ENCODE measurements at regions of chr5 and their contacts with region 1.

Region 1: DNA sequence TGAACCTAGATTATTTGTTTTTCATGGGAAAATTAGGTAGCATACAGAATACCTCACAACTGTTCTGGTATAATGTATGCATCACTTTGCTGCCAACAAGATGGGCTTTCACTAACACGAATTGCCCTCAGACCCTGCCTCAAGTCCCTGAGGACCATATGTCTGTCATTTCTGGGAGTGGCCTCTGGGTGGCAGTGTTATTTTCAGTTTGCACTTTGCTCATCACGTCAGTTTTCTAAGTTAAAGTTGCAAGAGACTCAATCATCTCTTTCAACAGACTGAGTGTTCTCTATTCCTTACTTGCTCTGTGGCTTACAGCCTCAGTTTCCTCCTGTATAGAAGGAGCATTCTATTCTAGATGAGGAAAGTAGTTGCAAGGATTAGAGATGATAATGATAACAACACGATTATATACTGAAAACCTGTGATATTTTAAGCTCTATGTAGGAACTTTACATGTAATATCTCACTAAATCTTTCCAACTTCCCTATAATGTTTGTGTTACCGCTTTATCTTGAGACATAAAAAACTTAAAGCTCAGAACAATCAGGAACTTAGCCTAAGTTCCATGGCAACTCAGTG is 55.7 kb downstream of the TSSK1B start:
- DNase-seq: peak; percentile 43 to 54 (median 48)
- H3K4me3 ChIP-seq: no peak overlapping the region
- H3K4me3 Mint-ChIP-seq: peak overlapping the region; percentile 31 to 84 (median 69)
- H3K27ac ChIP-seq: no peak overlapping the region
- H3K27ac Mint-ChIP-seq: peak overlapping the region in 3 of 7 donors; percentile 5 to 73 (median 19)
- H3K4me1 ChIP-seq: peaks cover 30% of the 10 kb centered on the region
- H3K4me1 Mint-ChIP-seq: peaks cover 33 to 58% (median 48%) of the 10 kb centered on the region in 4 donors
- H3K27me3 ChIP-seq: no peaks in the 10 kb centered on the region
- H3K27me3 Mint-ChIP-seq: peaks cover 4 to 7% of the 10 kb centered on the region in 2 donors

Region 2: DNA sequence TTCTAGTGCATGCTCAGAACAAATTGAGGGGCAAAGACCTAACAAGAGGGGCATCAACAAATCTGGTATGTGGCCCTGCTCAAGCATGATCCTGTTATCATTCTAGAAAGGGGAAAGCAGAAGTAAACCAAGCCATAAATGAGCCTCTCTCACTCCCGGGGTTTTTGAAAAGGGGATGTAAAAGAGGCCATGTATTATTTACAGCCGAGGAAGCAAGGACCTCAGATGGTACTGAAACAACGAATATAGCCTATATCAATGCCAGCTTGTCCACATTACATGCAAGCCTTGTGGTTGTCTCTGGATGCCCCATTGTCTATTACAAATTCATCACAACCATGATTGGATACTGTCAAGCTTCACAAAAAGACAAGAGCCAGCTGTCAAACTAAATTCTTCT is 191.1 kb before region 1 on chr5:
- CTCF ChIA-PET with region 1: no interaction called
- POLR2A ChIA-PET with region 1: no interaction called
- intact Hi-C with region 1: no loop called
- DNase-seq: no peak
- H3K4me3 ChIP-seq: no peak overlapping the region
- H3K4me3 Mint-ChIP-seq: no peak overlapping the region
- H3K27ac ChIP-seq: no peak overlapping the region
- H3K27ac Mint-ChIP-seq: no peak overlapping the region
- H3K4me1 ChIP-seq: no peaks in the 10 kb centered on the region
- H3K4me1 Mint-ChIP-seq: peaks cover 0 to 9% (median 2%) of the 10 kb centered on the region in 4 donors
- H3K27me3 ChIP-seq: no peaks in the 10 kb centered on the region
- H3K27me3 Mint-ChIP-seq: no peaks in the 10 kb centered on the region

Region 3: DNA sequence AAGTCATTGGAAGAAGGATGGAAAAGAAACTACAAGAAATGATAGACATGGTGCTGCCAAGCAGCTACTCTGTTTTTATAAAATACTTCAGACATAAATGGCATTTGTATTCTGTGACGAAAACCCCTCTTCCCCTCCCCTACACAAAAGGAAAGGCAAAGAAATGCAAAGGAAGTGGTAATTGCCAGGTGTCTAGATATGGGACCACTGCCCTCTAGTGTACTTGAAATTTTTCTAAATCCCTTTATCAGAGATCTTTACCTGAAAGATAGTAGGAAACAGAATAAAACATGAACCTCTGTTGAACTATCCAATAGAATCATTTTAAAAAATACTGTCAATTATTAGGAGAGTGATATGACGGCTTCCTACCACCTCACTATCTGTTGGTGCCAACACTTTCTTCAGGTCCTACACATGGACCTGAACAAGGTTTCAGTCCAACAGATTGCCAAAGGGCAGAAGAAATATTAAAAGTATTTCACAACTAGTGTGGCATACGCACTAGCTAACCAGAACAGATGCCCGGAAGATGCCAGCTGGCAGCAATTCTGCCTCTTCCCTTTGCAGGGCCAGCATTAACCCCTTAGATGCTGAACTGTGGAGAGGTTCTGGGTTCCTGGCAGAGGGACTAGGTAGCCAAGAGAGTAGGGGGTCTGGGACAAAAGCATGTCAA is 48.4 kb before region 1 on chr5:
- CTCF ChIA-PET with region 1: interaction called, 5 read pairs
- POLR2A ChIA-PET with region 1: no interaction called
- intact Hi-C with region 1: loop called (anchors 1 kb)
- DNase-seq: peak; percentile 41 to 69 (median 65)
- H3K4me3 ChIP-seq: no peak overlapping the region
- H3K4me3 Mint-ChIP-seq: peak overlapping the region in 6 of 8 donors; percentile 0 to 49 (median 30)
- H3K27ac ChIP-seq: no peak overlapping the region
- H3K27ac Mint-ChIP-seq: peak overlapping the region in 3 of 7 donors; percentile 43 to 81 (median 77)
- H3K4me1 ChIP-seq: peaks cover 11% of the 10 kb centered on the region
- H3K4me1 Mint-ChIP-seq: peaks cover 10 to 20% (median 12%) of the 10 kb centered on the region in 4 donors
- H3K27me3 ChIP-seq: no peaks in the 10 kb centered on the region
- H3K27me3 Mint-ChIP-seq: no peaks in the 10 kb centered on the region

Region 4: DNA sequence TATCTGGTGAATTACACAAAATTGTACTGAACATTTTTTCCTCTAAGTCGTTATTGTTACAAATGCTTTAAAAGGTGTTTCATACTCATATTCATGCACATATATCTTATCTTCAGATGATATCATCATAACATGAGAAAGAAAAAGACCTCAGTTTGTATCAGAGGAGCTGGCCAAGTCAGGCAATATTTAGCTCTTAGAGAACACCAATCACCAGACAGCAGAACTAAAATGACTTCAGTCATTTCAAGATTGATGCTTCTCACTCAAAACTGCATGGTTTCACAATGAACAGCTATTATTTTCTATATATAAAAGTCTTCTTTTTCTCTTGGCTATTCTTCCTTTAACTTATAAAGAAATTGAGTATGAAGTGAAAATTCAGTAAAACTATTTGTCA is 11.2 kb after region 1 on chr5:
- CTCF ChIA-PET with region 1: interaction called, 16 read pairs
- POLR2A ChIA-PET with region 1: no interaction called
- intact Hi-C with region 1: no loop called
- DNase-seq: no peak
- H3K4me3 ChIP-seq: no peak overlapping the region
- H3K4me3 Mint-ChIP-seq: no peak overlapping the region
- H3K27ac ChIP-seq: no peak overlapping the region
- H3K27ac Mint-ChIP-seq: no peak overlapping the region
- H3K4me1 ChIP-seq: no peaks in the 10 kb centered on the region
- H3K4me1 Mint-ChIP-seq: no peaks in the 10 kb centered on the region
- H3K27me3 ChIP-seq: no peaks in the 10 kb centered on the region
- H3K27me3 Mint-ChIP-seq: peaks cover 15 to 21% of the 10 kb centered on the region in 2 donors

Measured in CD4-positive, alpha-beta memory T cell (primary cell).